WTC11 (cell line): ENCODE measurements at regions of chr18 and their contacts with region 1.

Region 1: GRCh38 chr18:11733031-11733430 is 44.0 kb downstream of the GNAL start:
- DNase-seq: peak; percentile 90
- ATAC-seq: peak; percentile 91
- H3K4me3 Mint-ChIP-seq: no peak overlapping the region
- H3K27ac Mint-ChIP-seq: no peak overlapping the region
- H3K4me1 Mint-ChIP-seq: peaks cover 11% of the 10 kb centered on the region
- H3K27me3 Mint-ChIP-seq: peaks cover 3% of the 10 kb centered on the region; the same call in 1 of the 2 replicates
- CTCF ChIP-seq: peak; percentile 99

Region 2: GRCh38 chr18:11654736-11655605 is 78.1 kb before region 1 on chr18:
- CTCF ChIA-PET with region 1: interaction called, 99 read pairs
- POLR2A ChIA-PET with region 1: no interaction called
- DNase-seq: peak; percentile 84
- ATAC-seq: peak; percentile 89
- H3K4me3 Mint-ChIP-seq: peak overlapping the region; percentile 50
- H3K27ac Mint-ChIP-seq: no peak overlapping the region
- H3K4me1 Mint-ChIP-seq: peaks cover 6% of the 10 kb centered on the region
- H3K27me3 Mint-ChIP-seq: peaks cover 21% of the 10 kb centered on the region
- CTCF ChIP-seq: peak; percentile 89

Region 3: DNA sequence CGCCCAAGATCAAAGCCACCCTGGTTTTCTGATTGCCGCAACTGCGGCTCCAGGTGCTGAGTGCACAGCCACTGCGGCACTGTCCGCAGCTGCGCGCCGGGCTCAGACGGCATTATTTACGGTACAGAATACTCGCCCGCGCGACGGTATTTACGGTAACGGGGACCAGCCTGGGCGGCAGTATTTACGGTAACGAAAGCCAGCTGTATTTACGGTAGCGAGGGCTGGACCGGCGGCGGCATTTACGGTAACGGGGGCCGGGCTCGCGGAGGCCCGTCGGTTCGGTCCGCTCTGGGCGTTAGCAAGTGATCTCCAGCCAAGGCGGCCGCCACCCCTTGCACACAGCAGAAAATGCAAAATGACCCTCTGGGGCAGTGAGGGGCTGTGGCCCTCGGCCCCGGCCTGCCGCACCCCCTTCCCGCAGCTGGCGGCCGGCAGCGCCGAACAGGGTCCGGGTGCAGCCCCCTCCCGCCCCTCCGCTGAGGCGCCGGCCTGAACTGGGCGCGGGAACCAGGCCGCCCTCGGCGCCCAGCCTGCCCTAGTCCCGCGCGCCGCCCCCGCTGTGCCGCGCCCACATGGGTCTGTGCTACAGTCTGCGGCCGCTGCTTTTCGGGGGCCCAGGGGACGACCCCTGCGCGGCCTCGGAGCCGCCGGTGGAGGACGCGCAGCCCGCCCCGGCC is 43.9 kb before region 1 on chr18 and contains the start of gene GNAL:
- CTCF ChIA-PET with region 1: interaction called, 12 read pairs
- POLR2A ChIA-PET with region 1: no interaction called
- DNase-seq: peak; percentile 89
- ATAC-seq: peak; percentile 91
- H3K4me3 Mint-ChIP-seq: peak within 1 kb of the TSS; percentile 74
- H3K27ac Mint-ChIP-seq: no peak within 1 kb of the TSS
- H3K4me1 Mint-ChIP-seq: peaks cover 6% of the 10 kb centered on the region
- H3K27me3 Mint-ChIP-seq: peaks cover 22% of the 10 kb centered on the region
- CTCF ChIP-seq: no peak
- total RNA-seq, gene GNAL: 22.3 to 26.7 TPM (median 23.9 TPM) in 3 replicates

Region 4: GRCh38 chr18:11828786-11829432 is 95.9 kb after region 1 on chr18:
- CTCF ChIA-PET with region 1: interaction called, 14 read pairs
- POLR2A ChIA-PET with region 1: no interaction called
- DNase-seq: no peak
- ATAC-seq: peak; percentile 46
- H3K4me3 Mint-ChIP-seq: no peak overlapping the region
- H3K27ac Mint-ChIP-seq: peak overlapping the region; percentile 99
- H3K4me1 Mint-ChIP-seq: peaks cover 33% of the 10 kb centered on the region
- H3K27me3 Mint-ChIP-seq: no peaks in the 10 kb centered on the region
- CTCF ChIP-seq: no peak

Region 5: GRCh38 chr18:11995445-11996189 is 262.6 kb after region 1 on chr18:
- CTCF ChIA-PET with region 1: interaction called, 21 read pairs
- POLR2A ChIA-PET with region 1: interaction called, 3 read pairs
- DNase-seq: peak; percentile 73
- ATAC-seq: peak; percentile 90
- H3K4me3 Mint-ChIP-seq: peak overlapping the region; percentile 26
- H3K27ac Mint-ChIP-seq: peak overlapping the region; percentile 92
- H3K4me1 Mint-ChIP-seq: peaks cover 48% of the 10 kb centered on the region
- H3K27me3 Mint-ChIP-seq: no peaks in the 10 kb centered on the region
- CTCF ChIP-seq: peak; percentile 47